Transverse colon (tissue), 4 donors: ENCODE measurements at regions of chr17 and their contacts with region 1.

Region 1: DNA sequence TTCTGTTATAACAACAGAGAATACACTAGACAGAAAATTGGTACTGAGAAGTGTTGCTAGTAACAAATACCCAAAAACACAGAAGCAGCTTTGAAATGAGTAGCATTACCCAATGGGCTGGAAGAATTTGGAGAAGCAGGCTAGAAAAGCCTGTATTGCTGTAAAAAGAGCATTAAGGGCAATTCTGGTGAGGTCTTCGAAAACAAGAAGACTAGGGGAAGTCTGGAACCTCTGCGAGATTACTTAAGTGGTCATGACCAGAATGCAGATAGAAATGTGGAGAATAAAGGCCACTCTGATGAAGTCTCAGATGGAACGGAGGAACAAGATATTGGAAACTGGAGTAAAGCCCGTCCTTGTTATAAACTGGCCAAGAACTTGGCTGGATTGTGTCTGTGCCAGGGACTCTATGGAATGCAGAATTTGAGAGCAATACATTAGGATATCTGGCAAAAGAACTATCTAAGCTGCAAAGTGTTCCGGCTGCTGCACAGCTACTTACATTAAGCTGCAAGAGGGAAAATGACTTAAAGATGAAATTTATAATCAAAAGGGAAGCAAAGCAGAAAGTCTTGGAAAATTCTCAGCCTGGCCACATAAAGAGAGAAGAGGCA is 44.9 kb upstream of the PEMT start:
- DNase-seq: no peak
- H3K4me3 ChIP-seq: no peak overlapping the region
- H3K27ac ChIP-seq: no peak overlapping the region
- H3K4me1 ChIP-seq: no peaks in the 10 kb centered on the region
- H3K27me3 ChIP-seq: no peaks in the 10 kb centered on the region
- CTCF ChIP-seq: no peak
- EP300 ChIP-seq: no peak
- POLR2A ChIP-seq: no peak

Region 2: GRCh38 chr17:17511881-17512858 is 124.2 kb before region 1 on chr17:
- in situ Hi-C with region 1: loop called in 1 of 4 experiments (anchors 10 kb)
- intact Hi-C with region 1: loop called (anchors 10 kb)
- DNase-seq: no peak
- H3K4me3 ChIP-seq: no peak overlapping the region
- H3K27ac ChIP-seq: no peak overlapping the region
- H3K4me1 ChIP-seq: peaks cover 0 to under 1% (median 0%) of the 10 kb centered on the region in 4 donors
- H3K27me3 ChIP-seq: no peaks in the 10 kb centered on the region
- CTCF ChIP-seq: no peak
- EP300 ChIP-seq: no peak
- POLR2A ChIP-seq: no peak